CD4-positive, alpha-beta memory T cell (primary cell): ENCODE measurements at regions of chr13 and their contacts with region 1.

Region 1: DNA sequence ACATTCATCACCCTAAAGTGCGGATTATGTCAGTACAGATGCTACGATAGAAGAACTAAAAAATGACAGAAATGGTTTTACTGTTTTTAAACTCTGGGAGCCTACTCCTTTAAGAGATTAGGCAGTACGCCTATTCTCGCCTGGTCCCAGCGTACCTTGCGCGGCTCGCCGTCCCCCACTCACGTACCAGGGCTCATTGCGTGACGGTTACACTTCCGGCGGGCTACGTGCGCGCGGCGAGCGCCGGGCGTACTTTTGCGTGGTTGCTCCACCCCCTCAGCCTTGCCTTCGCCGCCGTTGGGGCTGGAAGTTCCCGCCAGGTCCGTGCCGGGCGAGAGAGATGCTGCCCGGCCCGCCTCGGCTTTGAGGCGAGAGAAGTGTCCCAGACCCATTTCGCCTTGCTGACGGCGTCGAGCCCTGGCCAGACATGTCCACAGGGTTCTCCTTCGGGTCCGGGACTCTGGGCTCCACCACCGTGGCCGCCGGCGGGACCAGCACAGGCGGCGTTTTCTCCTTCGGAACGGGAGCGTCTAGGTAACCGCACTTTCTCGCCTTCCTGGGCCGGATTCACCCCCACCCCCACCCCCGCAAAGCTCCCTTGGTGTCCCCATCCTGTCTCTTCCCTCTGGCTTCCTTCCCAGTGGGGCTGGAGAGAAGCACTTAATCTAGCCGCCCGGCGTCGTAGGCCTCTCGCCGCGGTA is at the start of gene NUP58:
- DNase-seq: peak; percentile 92 to 96 (median 93)
- H3K4me3 ChIP-seq: peak within 1 kb of the TSS; percentile 86 to 93
- H3K4me3 Mint-ChIP-seq: peak within 1 kb of the TSS; percentile 91 to 97 (median 92)
- H3K27ac ChIP-seq: peak within 1 kb of the TSS; percentile 96
- H3K27ac Mint-ChIP-seq: peak within 1 kb of the TSS; percentile 93 to 97 (median 97)
- H3K4me1 ChIP-seq: peaks cover 27% of the 10 kb centered on the region
- H3K4me1 Mint-ChIP-seq: peaks cover 19 to 50% (median 37%) of the 10 kb centered on the region in 4 donors
- H3K27me3 ChIP-seq: peaks cover 5% of the 10 kb centered on the region
- H3K27me3 Mint-ChIP-seq: peaks cover 3 to 6% of the 10 kb centered on the region in 2 donors
- total RNA-seq, gene NUP58: 42.9 to 43.3 TPM

Region 2: GRCh38 chr13:24270639-24271141 is 1030.8 kb before region 1 on chr13:
- CTCF ChIA-PET with region 1: no interaction called
- POLR2A ChIA-PET with region 1: no interaction called
- intact Hi-C with region 1: loop called (anchors 5 kb)
- DNase-seq: peak; percentile 74 to 80 (median 76)
- H3K4me3 ChIP-seq: peak overlapping the region; percentile 14 to 66
- H3K4me3 Mint-ChIP-seq: peak overlapping the region; percentile 83 to 99 (median 92)
- H3K27ac ChIP-seq: peak overlapping the region; percentile 90
- H3K27ac Mint-ChIP-seq: peak overlapping the region; percentile 98 to 100 (median 99)
- H3K4me1 ChIP-seq: peaks cover 98% of the 10 kb centered on the region
- H3K4me1 Mint-ChIP-seq: peaks cover 72 to 97% (median 85%) of the 10 kb centered on the region in 4 donors
- H3K27me3 ChIP-seq: no peaks in the 10 kb centered on the region
- H3K27me3 Mint-ChIP-seq: peaks cover 2% of the 10 kb centered on the region in 2 donors

Region 3: DNA sequence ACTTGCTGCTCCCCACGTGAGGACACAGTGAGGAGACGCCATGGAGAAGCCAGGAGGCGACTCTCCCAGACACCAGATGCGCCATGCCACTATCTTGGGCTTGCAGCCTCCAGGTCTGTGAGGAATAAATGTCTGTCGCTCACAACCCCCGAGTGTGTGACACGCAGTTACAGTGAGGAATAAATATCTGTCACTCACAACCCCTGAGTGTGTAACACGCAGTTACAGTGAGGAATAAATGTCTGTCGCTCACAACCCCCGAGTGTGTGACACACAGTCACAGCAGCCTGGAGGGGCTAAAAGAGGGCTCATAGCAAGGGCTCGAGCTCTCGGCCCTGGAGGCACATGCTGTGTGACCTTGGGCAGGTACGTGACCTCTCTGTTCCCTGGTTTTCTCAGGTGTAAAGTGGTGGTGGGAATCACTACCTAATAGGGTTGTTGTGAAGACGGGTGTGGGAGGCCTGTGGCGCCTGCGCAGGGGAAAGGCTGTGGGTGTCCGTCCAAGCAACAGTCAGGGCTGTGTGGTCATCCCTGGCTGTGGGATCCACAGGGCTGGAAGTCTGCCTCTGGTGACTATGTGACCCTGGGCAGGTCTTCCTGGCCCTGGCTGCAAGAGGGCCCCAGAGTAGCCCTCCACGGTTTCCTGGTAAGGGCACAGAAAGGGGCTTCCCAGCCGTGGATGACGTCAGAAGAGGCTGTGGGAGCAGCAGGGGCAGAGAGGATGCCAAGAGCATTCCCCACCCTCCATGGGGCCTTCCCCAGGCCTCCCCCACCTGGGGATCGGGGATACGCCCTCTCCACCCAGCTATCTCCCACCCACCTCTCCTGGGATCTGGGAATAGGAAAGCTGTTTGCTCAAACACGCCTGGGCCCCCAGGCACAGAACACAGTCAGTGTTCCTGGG is 914.4 kb before region 1 on chr13:
- CTCF ChIA-PET with region 1: no interaction called
- POLR2A ChIA-PET with region 1: no interaction called
- intact Hi-C with region 1: no loop called
- DNase-seq: no peak
- H3K4me3 ChIP-seq: no peak overlapping the region
- H3K4me3 Mint-ChIP-seq: no peak overlapping the region
- H3K27ac ChIP-seq: no peak overlapping the region
- H3K27ac Mint-ChIP-seq: no peak overlapping the region
- H3K4me1 ChIP-seq: no peaks in the 10 kb centered on the region
- H3K4me1 Mint-ChIP-seq: no peaks in the 10 kb centered on the region
- H3K27me3 ChIP-seq: no peaks in the 10 kb centered on the region
- H3K27me3 Mint-ChIP-seq: peaks cover 0 to 2% of the 10 kb centered on the region in 2 donors

Region 4: GRCh38 chr13:25267715-25268114 is 33.8 kb before region 1 on chr13:
- CTCF ChIA-PET with region 1: no interaction called
- POLR2A ChIA-PET with region 1: no interaction called
- intact Hi-C with region 1: loop called (anchors 5 kb)
- DNase-seq: peak in 3 of 5 donors; percentile 11 to 21 (median 19)
- H3K4me3 ChIP-seq: no peak overlapping the region
- H3K4me3 Mint-ChIP-seq: no peak overlapping the region
- H3K27ac ChIP-seq: no peak overlapping the region
- H3K27ac Mint-ChIP-seq: peak overlapping the region in 5 of 7 donors; percentile 0 to 51 (median 19)
- H3K4me1 ChIP-seq: no peaks in the 10 kb centered on the region
- H3K4me1 Mint-ChIP-seq: peaks cover 0 to 15% (median 10%) of the 10 kb centered on the region in 4 donors
- H3K27me3 ChIP-seq: no peaks in the 10 kb centered on the region
- H3K27me3 Mint-ChIP-seq: no peaks in the 10 kb centered on the region

Region 5: DNA sequence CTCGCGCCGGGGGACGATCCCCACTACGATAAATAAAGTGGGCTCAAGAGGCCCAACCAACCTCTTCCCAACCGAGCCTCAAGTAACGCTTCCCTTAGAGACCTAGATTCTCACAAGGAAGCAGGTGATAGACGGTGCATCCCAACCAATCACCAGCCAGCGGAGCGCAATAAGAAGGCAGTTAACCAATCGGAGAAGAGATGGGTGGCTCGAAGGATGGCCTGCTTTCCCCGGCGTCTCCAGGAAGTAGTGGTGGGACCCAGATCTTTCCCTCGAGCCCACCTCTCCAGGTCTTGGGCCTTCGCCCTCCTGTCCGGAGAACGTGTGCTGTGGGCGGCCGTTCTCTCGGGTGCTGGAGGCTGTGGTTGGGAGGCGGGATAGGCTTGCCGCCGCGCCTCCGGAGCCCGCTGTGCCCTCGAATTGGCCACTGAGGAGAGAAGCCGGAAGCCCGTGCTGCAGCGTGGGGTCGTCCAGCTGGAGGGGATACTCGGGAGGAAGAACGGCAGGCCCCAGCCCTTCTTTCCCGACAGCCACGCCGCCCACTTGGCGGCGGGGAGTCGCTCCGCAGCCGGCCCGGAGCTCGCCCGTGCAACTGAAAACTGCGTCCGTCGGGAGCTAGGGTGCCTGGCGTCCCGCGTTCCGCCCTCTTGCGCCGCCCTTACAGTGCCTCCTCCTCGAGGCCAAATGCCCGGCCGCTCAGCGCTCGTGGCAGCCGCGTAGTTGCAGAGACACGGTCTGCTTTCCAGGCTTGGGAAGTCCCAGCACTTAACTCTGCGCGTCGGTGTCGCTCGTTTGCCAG is 920.4 kb after region 1 on chr13 and contains the start of gene RNF6:
- CTCF ChIA-PET with region 1: no interaction called
- POLR2A ChIA-PET with region 1: interaction called, 3 read pairs
- intact Hi-C with region 1: loop called (anchors 1 kb)
- DNase-seq: peak; percentile 88 to 95 (median 91)
- H3K4me3 ChIP-seq: peak within 1 kb of the TSS; percentile 86 to 98
- H3K4me3 Mint-ChIP-seq: peak within 1 kb of the TSS; percentile 95 to 100 (median 100)
- H3K27ac ChIP-seq: peak within 1 kb of the TSS; percentile 94
- H3K27ac Mint-ChIP-seq: peak within 1 kb of the TSS; percentile 92 to 99 (median 99)
- H3K4me1 ChIP-seq: peaks cover 29% of the 10 kb centered on the region
- H3K4me1 Mint-ChIP-seq: peaks cover 28 to 48% (median 41%) of the 10 kb centered on the region in 4 donors
- H3K27me3 ChIP-seq: no peaks in the 10 kb centered on the region
- H3K27me3 Mint-ChIP-seq: peaks cover 0 to 2% of the 10 kb centered on the region in 2 donors
- total RNA-seq, gene RNF6: 46.7 to 47.9 TPM